ENCODE measurements at regions of chr1 and their contacts with region 1.

Region 1: DNA sequence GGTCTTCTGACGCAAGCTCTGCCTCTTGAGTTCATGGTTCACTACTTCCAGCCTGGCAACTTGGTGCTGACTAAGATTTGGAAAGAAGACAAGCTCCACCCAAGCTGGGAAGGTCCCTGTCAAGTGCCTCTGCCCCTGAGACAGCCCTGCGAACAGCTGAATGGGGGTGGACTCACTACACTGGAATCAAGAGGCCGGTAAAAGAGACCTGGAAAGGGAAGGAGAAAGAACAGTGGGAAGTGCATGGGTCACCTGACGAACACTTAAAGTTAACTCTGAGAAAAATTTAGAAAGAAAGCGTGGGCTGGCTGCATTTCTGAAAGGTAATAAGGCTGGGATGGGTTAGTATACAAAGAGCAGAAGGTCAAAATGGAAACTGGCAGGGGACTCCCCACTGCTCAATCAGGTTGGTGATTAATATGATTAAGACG is 26.1 kb upstream of the ZNF496 start:
- DNase-seq: no peak
- ATAC-seq: peak; percentile 93
- H3K4me3 Mint-ChIP-seq: peak overlapping the region; percentile 64
- H3K27ac Mint-ChIP-seq: peak overlapping the region; percentile 61
- H3K4me1 Mint-ChIP-seq: peaks cover 26% of the 10 kb centered on the region
- H3K27me3 Mint-ChIP-seq: peaks cover 39% of the 10 kb centered on the region
- CTCF ChIP-seq: no peak

Region 2: GRCh38 chr1:247316590-247317197 is 41.1 kb before region 1 on chr1:
- CTCF ChIA-PET with region 1: no interaction called
- POLR2A ChIA-PET with region 1: no interaction called
- intact Hi-C with region 1: loop called (anchors 5 kb)
- DNase-seq: no peak
- ATAC-seq: peak; percentile 45
- H3K4me3 Mint-ChIP-seq: peak overlapping the region; percentile 53
- H3K27ac Mint-ChIP-seq: peak overlapping the region; percentile 70
- H3K4me1 Mint-ChIP-seq: peaks cover 31% of the 10 kb centered on the region
- H3K27me3 Mint-ChIP-seq: no peaks in the 10 kb centered on the region
- CTCF ChIP-seq: no peak

Region 3: GRCh38 chr1:247331172-247331991 is 26.4 kb before region 1 on chr1 and contains the start of gene ZNF496:
- CTCF ChIA-PET with region 1: no interaction called
- POLR2A ChIA-PET with region 1: interaction called, 3 read pairs
- intact Hi-C with region 1: loop called (anchors 1 kb)
- DNase-seq: peak; percentile 59
- ATAC-seq: peak; percentile 73
- H3K4me3 Mint-ChIP-seq: peak within 1 kb of the TSS; percentile 89
- H3K27ac Mint-ChIP-seq: peak within 1 kb of the TSS; percentile 59
- H3K4me1 Mint-ChIP-seq: peaks cover 23% of the 10 kb centered on the region
- H3K27me3 Mint-ChIP-seq: no peaks in the 10 kb centered on the region
- CTCF ChIP-seq: no peak
- total RNA-seq, gene ZNF496: 15.0 and 21.2 TPM in 2 replicates

Region 4: DNA sequence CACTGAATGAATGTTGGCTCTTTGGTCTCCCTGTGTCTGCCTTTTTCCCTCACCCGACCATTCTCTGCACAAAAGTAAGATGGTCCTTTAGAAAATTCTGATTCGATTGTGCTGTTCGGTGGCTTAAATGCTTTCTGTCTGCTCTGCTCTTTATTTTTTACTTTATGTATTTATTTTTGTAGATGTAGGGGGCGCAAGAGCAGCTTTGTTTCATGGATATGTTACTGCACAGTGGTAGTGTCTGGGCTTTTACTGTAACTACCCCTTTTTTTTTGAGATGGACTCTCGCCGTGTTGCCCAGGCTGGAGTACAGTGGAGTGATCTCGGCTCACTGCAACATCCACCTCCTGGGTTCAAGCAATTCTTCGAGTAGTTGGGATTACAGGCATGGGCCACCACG is 73.8 kb after region 1 on chr1:
- CTCF ChIA-PET with region 1: no interaction called
- POLR2A ChIA-PET with region 1: no interaction called
- intact Hi-C with region 1: no loop called
- DNase-seq: no peak
- ATAC-seq: no peak
- H3K4me3 Mint-ChIP-seq: no peak overlapping the region
- H3K27ac Mint-ChIP-seq: no peak overlapping the region
- H3K4me1 Mint-ChIP-seq: peaks cover 26% of the 10 kb centered on the region
- H3K27me3 Mint-ChIP-seq: no peaks in the 10 kb centered on the region
- CTCF ChIP-seq: no peak

Region 5: DNA sequence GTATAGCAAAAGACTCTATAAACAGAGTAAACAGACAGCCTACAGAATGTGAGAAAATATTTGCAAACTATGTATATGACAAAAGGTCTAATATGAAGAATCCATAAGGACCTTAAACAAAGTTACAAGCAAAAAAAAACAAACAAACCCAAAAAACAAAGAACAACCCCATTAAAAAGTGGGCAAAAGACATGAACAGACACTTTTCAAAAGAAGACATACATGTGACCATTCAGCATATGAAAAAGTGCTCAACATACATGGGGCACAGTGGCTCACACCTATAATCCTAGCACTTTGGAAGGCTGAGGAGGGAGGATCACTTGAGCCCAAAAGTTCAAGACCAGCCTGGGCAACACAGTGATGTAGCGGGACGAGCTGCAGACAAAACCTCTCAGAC is 118.0 kb after region 1 on chr1:
- CTCF ChIA-PET with region 1: no interaction called
- POLR2A ChIA-PET with region 1: no interaction called
- intact Hi-C with region 1: loop called (anchors 1 kb)
- DNase-seq: no peak
- ATAC-seq: no peak
- H3K4me3 Mint-ChIP-seq: no peak overlapping the region
- H3K27ac Mint-ChIP-seq: peak overlapping the region; percentile 95
- H3K4me1 Mint-ChIP-seq: peaks cover 40% of the 10 kb centered on the region
- H3K27me3 Mint-ChIP-seq: no peaks in the 10 kb centered on the region
- CTCF ChIP-seq: no peak

Region 6: DNA sequence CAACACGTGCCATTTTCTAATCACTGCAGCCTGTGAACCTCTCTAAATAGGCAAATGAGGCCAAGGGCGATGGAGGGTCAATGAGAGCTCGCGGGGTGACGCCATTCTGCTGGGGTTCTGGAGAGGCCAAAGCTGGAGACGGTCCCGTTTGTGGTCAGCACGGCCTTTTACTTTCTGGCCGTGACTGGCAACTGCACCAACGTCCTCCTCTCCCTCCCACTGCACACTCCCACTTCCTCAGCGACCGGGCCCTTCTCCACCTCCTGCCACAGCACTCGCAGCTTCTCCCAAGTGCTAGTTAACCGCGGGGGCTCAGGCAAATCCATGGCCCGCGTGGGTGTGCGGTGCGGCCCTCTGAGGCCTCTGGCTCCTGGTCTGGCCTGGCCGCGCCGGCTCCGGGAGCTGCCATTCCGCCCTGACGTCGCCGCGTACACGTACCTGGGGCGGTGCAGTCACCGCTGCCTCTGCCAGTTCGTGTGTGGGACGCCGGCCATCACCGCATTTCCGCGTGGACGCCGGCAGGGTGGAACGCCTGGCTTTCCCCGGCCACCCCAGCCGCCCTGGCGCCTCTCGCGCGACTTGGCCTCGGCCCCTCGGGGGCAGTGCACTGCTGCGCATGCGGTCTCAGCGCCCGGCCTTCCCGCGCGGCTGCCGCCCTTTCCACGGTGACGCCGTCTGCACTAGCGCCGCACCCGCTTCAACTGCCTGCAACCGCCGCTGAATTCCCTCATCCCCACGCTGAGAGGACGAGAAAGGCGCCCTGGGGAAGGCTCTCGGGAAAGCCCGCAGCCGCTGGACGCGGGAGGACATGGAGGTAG is 160.2 kb after region 1 on chr1:
- CTCF ChIA-PET with region 1: no interaction called
- POLR2A ChIA-PET with region 1: no interaction called
- intact Hi-C with region 1: no loop called
- DNase-seq: no peak
- ATAC-seq: no peak
- H3K4me3 Mint-ChIP-seq: no peak overlapping the region
- H3K27ac Mint-ChIP-seq: no peak overlapping the region
- H3K4me1 Mint-ChIP-seq: no peaks in the 10 kb centered on the region
- H3K27me3 Mint-ChIP-seq: peaks cover 8% of the 10 kb centered on the region
- CTCF ChIP-seq: no peak

Region 7: DNA sequence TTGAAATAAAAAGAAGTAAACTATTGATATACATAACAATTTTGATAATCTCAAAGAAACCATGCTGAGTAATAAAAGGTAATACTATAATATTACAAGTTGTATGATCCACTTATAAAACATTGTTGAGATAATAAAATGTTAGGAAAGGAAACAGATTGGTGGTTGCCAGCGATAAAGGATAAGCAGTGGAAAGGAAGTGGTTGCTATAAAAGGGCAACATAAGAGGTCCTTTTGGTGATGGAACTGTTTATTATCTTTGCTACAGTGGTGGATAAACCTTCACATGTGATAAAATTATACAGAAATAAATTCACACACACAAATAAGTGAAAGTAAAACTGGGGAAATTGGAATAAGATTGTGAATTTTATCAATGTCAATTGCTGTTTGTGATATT is 343.5 kb after region 1 on chr1:
- CTCF ChIA-PET with region 1: no interaction called
- POLR2A ChIA-PET with region 1: no interaction called
- intact Hi-C with region 1: no loop called
- DNase-seq: no peak
- ATAC-seq: no peak
- H3K4me3 Mint-ChIP-seq: no peak overlapping the region
- H3K27ac Mint-ChIP-seq: no peak overlapping the region
- H3K4me1 Mint-ChIP-seq: no peaks in the 10 kb centered on the region
- H3K27me3 Mint-ChIP-seq: no peaks in the 10 kb centered on the region
- CTCF ChIP-seq: no peak